HCT116 (cell line): ENCODE measurements at regions of chr2 and their contacts with region 1.

Region 1: GRCh38 chr2:163345908-163346573 is 389.8 kb downstream of the FIGN start:
- DNase-seq: peak; percentile 55
- ATAC-seq: peak; percentile 37; the same call in 1 of the 2 replicates
- H3K4me3 ChIP-seq: no peak overlapping the region
- H3K27ac ChIP-seq: no peak overlapping the region
- H3K4me1 ChIP-seq: peaks cover 18 to 36% of the 10 kb centered on the region in 2 experiments
- H3K27me3 ChIP-seq: no peaks in the 10 kb centered on the region
- CTCF ChIP-seq: peak; percentile 51 to 72 (median 64); a peak in 5 of 6 replicates
- POLR2A ChIP-seq: no peak
- RAD21 ChIP-seq: peak; percentile 74

Region 2: GRCh38 chr2:163191372-163191771 is 154.7 kb before region 1 on chr2:
- CTCF ChIA-PET with region 1: no interaction called
- POLR2A ChIA-PET with region 1: no interaction called
- RAD21 ChIA-PET with region 1: no interaction called
- intact Hi-C with region 1: loop called (anchors 5 kb)
- DNase-seq: peak; percentile 21
- ATAC-seq: peak; percentile 42; the same call in 1 of the 2 replicates
- H3K4me3 ChIP-seq: no peak overlapping the region
- H3K27ac ChIP-seq: no peak overlapping the region
- H3K4me1 ChIP-seq: no peaks in the 10 kb centered on the region
- H3K27me3 ChIP-seq: no peaks in the 10 kb centered on the region
- CTCF ChIP-seq: peak; percentile 42 to 69 (median 58); a peak in 5 of 6 replicates
- POLR2A ChIP-seq: no peak
- RAD21 ChIP-seq: peak; percentile 69

Region 3: DNA sequence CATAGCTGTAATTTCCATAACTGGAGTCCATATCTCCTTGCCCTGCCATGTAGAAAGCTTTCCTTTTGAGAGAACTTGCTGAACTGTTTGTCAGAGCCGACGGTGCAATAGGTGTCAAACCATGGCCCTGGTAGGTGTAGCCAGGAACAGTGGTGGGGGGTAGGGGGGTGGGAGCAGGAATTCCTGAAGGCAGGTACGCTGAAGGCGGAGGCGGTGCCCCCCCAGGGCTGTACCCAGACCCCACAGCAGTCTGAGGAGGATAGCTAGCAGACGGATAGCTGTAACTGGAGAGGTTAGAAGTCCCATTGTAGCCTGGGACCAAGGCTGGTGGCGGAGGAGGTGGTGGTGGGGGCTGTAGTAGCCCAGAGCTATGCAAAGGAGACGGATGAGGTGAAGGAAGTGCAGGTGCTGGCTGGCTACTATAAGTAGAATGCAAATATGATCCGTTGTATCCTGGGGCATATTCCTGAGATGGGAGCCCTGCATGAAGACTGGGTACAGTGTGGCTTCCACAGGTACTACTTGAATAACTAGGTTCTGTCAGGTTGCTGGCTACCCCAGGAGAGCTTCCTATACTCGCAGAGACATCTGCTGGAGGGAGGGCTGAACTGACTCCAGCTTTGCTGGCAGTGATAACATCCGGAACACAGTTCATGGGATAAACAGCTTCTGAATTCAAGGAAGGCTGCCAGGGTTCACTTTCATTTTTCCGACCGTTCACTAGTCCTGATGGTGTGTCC is 264.9 kb after region 1 on chr2:
- CTCF ChIA-PET with region 1: no interaction called
- POLR2A ChIA-PET with region 1: no interaction called
- RAD21 ChIA-PET with region 1: no interaction called
- intact Hi-C with region 1: loop called (anchors 5 kb)
- DNase-seq: peak; percentile 6
- ATAC-seq: peak; percentile 80
- H3K4me3 ChIP-seq: no peak overlapping the region
- H3K27ac ChIP-seq: no peak overlapping the region
- H3K4me1 ChIP-seq: no peaks in the 10 kb centered on the region
- H3K27me3 ChIP-seq: peaks cover 48% of the 10 kb centered on the region
- CTCF ChIP-seq: peak in 2 of 3 experiments; percentile 47; a peak in 4 of 6 replicates
- POLR2A ChIP-seq: no peak
- RAD21 ChIP-seq: peak; percentile 37; the same call in 1 of the 2 replicates

Region 4: GRCh38 chr2:163878531-163879117 is 532.6 kb after region 1 on chr2:
- CTCF ChIA-PET with region 1: interaction called, 5 read pairs
- POLR2A ChIA-PET with region 1: no interaction called
- RAD21 ChIA-PET with region 1: no interaction called
- intact Hi-C with region 1: loop called (anchors 5 kb)
- DNase-seq: peak; percentile 12
- ATAC-seq: peak; percentile 81
- H3K4me3 ChIP-seq: no peak overlapping the region
- H3K27ac ChIP-seq: no peak overlapping the region
- H3K4me1 ChIP-seq: no peaks in the 10 kb centered on the region
- H3K27me3 ChIP-seq: 0 out of 2 replicates have a peak, but pooled peaks cover 8% of the 10 kb centered on the region
- CTCF ChIP-seq: peak; percentile 44 to 91 (median 78); a peak in 5 of 6 replicates
- POLR2A ChIP-seq: no peak
- RAD21 ChIP-seq: peak; percentile 60

Region 5: DNA sequence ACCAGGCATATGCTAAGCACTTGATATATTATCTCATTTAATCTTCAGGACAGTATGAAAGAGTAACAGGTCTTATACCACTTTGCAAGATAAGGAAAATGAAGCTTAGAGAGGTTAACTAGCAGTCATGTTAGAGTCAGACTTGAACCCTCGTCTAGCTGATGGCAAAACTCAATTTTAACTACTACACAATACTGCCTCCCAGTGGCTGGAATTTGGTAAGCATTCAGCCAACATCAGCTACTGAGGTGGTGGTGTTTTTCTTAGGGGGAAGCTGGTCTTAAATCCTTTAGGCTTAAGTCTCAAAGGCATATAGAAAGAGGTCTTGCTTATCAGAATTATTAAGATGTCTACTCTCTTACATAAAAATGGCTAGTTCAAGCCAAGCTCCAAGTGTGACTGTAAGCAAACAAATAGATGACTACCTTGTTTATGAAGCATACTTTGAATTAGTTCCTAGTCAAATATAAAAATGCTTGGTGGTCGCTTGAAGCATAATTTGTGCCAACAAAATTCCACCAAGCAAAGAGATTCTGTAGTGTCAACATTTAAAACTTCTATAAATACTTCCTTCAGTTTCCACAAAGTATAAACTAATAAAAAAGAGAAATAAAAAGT is 715.2 kb after region 1 on chr2:
- CTCF ChIA-PET with region 1: interaction called, 12 read pairs
- POLR2A ChIA-PET with region 1: no interaction called
- RAD21 ChIA-PET with region 1: no interaction called
- intact Hi-C with region 1: loop called (anchors 5 kb)
- DNase-seq: peak; percentile 22
- ATAC-seq: peak; percentile 53; the same call in 1 of the 2 replicates
- H3K4me3 ChIP-seq: no peak overlapping the region
- H3K27ac ChIP-seq: no peak overlapping the region
- H3K4me1 ChIP-seq: no peaks in the 10 kb centered on the region
- H3K27me3 ChIP-seq: peaks cover 3% of the 10 kb centered on the region; the same call in 1 of the 2 replicates
- CTCF ChIP-seq: peak; percentile 40 to 83 (median 67); a peak in 5 of 6 replicates
- POLR2A ChIP-seq: no peak
- RAD21 ChIP-seq: peak; percentile 65

Region 6: GRCh38 chr2:164430166-164430783 is 1084.2 kb after region 1 on chr2:
- CTCF ChIA-PET with region 1: no interaction called
- POLR2A ChIA-PET with region 1: no interaction called
- RAD21 ChIA-PET with region 1: no interaction called
- intact Hi-C with region 1: loop called (anchors 5 kb)
- DNase-seq: peak; percentile 23
- ATAC-seq: peak; percentile 81
- H3K4me3 ChIP-seq: no peak overlapping the region
- H3K27ac ChIP-seq: no peak overlapping the region
- H3K4me1 ChIP-seq: no peaks in the 10 kb centered on the region
- H3K27me3 ChIP-seq: peaks cover 38% of the 10 kb centered on the region
- CTCF ChIP-seq: peak; percentile 38 to 71 (median 70); a peak in 5 of 6 replicates
- POLR2A ChIP-seq: no peak
- RAD21 ChIP-seq: peak; percentile 61

Region 7: GRCh38 chr2:164479460-164479859 is 1133.4 kb after region 1 on chr2:
- CTCF ChIA-PET with region 1: interaction called, 5 read pairs
- POLR2A ChIA-PET with region 1: no interaction called
- RAD21 ChIA-PET with region 1: no interaction called
- intact Hi-C with region 1: loop called (anchors 10 kb)
- DNase-seq: peak; percentile 27
- ATAC-seq: no peak
- H3K4me3 ChIP-seq: no peak overlapping the region
- H3K27ac ChIP-seq: no peak overlapping the region
- H3K4me1 ChIP-seq: no peaks in the 10 kb centered on the region
- H3K27me3 ChIP-seq: peaks cover 23% of the 10 kb centered on the region
- CTCF ChIP-seq: peak; percentile 24 to 53 (median 26); a peak in 4 of 6 replicates
- POLR2A ChIP-seq: no peak
- RAD21 ChIP-seq: peak; percentile 60